Panc1 (cell line): ENCODE measurements at regions of chr6 and their contacts with region 1.

Region 1: DNA sequence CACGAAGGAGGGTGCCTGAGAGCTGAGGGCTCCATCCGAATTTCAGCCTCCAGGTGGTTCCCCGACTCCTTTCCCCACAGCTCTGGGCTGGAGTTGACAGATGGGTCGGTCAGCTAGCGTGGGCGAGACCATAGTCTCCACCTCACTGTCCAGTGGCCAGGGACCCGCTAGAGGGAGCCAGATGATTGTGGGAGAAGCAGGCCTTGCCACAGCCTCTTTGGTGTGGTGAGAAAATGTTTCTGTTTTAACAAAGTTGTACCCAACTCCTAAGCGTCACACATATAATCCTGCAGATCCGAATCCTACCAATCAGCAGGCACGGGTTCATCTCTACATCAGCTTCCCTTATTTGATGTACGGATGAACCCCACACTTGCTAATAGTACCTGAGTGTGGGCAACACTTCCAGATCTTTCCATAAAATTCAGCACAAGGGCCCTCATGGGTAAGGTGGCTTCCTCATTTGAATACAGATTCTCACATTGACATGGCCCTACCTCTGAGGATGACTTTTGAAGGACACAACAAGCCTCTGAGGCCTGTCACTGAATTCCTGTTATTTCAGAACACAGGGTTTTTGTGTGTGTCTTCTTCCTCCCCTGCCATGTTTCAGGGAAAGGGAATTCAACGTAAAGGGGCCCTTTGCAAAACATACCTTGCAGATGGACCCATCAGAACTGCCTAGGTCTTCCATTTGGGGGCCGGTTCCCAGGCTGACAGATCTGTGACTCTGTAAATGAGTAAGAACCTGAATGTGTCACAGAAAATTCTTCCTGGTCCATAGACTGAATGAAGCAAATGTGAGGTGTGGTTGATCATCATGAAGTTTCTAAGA is 103.2 kb upstream of the DUSP22 start:
- DNase-seq: peak; percentile 64
- ATAC-seq: peak; percentile 99
- H3K4me3 ChIP-seq: no peak overlapping the region
- H3K27ac ChIP-seq: no peak overlapping the region
- H3K4me1 ChIP-seq: no peaks in the 10 kb centered on the region; the same call in 1 of the 2 replicates
- H3K27me3 ChIP-seq: no peaks in the 10 kb centered on the region; the same call in 1 of the 2 replicates
- CTCF ChIP-seq: peak; percentile 96

Region 2: GRCh38 chr6:291697-292505 is 102.9 kb after region 1 on chr6 and contains the start of gene DUSP22:
- CTCF ChIA-PET with region 1: no interaction called
- POLR2A ChIA-PET with region 1: no interaction called
- in situ Hi-C with region 1: no loop called
- intact Hi-C with region 1: no loop called
- DNase-seq: no peak
- ATAC-seq: peak; percentile 91
- H3K4me3 ChIP-seq: peak within 1 kb of the TSS; percentile 55 to 90
- H3K27ac ChIP-seq: peak within 1 kb of the TSS; percentile 87
- H3K4me1 ChIP-seq: peaks cover 8% of the 10 kb centered on the region; the same call in 1 of the 2 replicates
- H3K27me3 ChIP-seq: 0 out of 2 replicates have a peak, but pooled peaks cover 2% of the 10 kb centered on the region
- CTCF ChIP-seq: no peak
- total RNA-seq, gene DUSP22: 34.8 TPM

Region 3: GRCh38 chr6:364609-365540 is 175.8 kb after region 1 on chr6:
- CTCF ChIA-PET with region 1: interaction called, 13 read pairs
- POLR2A ChIA-PET with region 1: no interaction called
- in situ Hi-C with region 1: no loop called
- intact Hi-C with region 1: no loop called
- DNase-seq: no peak
- ATAC-seq: no peak
- H3K4me3 ChIP-seq: no peak overlapping the region
- H3K27ac ChIP-seq: no peak overlapping the region
- H3K4me1 ChIP-seq: no peaks in the 10 kb centered on the region
- H3K27me3 ChIP-seq: peaks cover 12% of the 10 kb centered on the region
- CTCF ChIP-seq: no peak